Activated CD4-positive, alpha-beta T cell treated with anti-CD3 and anti-CD28 coated beads for 36 hours (primary cell): ENCODE measurements at regions of chr2 and their contacts with region 1.

Region 1: DNA sequence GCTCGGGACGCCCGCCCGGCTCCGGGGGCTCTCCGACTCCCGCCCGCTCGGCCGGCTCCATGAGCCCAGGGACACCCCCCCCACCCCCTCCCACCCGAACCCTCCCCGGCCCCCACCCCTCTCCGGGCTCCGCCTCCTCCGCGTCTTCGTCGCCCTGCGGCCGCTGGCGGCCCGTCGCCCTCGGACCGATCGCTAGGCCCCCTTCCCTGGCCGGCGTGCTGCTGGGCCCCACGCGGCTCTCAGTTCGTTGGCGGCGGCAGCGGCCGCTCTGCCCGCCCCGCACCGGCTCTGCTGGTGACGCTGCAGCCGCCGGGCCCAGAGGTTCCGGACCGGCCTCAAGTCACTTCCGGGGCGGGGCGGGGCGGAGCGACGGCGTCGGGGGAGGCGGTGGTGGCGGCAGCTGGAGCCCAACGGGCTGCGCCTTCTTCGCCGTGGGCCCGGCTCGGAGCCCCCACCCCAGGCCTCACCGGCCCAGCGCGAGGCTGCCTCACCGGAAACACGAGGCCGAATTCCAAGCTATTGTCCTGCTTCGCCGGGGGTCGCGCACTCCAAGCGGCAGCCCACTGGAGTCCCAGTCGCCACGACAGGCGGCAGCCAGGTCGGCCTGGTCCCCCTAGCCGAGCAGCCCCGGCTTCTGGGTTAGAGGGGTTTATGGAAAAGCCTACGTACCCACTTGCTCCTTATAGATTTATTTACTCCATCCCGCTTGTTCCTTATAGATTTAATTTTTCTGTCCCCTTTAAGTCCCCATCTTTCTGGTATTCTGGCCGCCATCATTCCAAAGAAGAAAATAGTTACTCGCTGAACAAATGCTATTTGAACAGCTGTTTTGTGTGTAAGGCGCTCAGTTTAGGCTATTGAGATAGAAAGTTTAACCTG is at the start of gene PSME4:
- DNase-seq: peak; percentile 96
- ATAC-seq: peak; percentile 86
- H3K4me3 Mint-ChIP-seq: peak within 1 kb of the TSS; percentile 84
- H3K27ac Mint-ChIP-seq: peak within 1 kb of the TSS; percentile 97
- H3K4me1 Mint-ChIP-seq: peaks cover 35% of the 10 kb centered on the region
- H3K27me3 Mint-ChIP-seq: no peaks in the 10 kb centered on the region
- total RNA-seq, gene PSME4: 37.8 to 44.3 TPM

Region 2: GRCh38 chr2:53767405-53768241 is 203.3 kb before region 1 on chr2 and contains the start of gene CHAC2:
- CTCF ChIA-PET with region 1: no interaction called
- POLR2A ChIA-PET with region 1: no interaction called
- intact Hi-C with region 1: loop called in 1 of 2 experiments (anchors 1 kb)
- DNase-seq: peak; percentile 94
- ATAC-seq: peak; percentile 96
- H3K4me3 Mint-ChIP-seq: peak within 1 kb of the TSS; percentile 91
- H3K27ac Mint-ChIP-seq: peak within 1 kb of the TSS; percentile 96
- H3K4me1 Mint-ChIP-seq: peaks cover 26% of the 10 kb centered on the region
- H3K27me3 Mint-ChIP-seq: no peaks in the 10 kb centered on the region
- total RNA-seq, gene CHAC2: 15.8 to 17.4 TPM

Region 3: GRCh38 chr2:53886406-53887280 is 84.3 kb before region 1 on chr2:
- CTCF ChIA-PET with region 1: no interaction called
- POLR2A ChIA-PET with region 1: no interaction called
- intact Hi-C with region 1: loop called in 1 of 2 experiments (anchors 2 kb)
- DNase-seq: no peak
- ATAC-seq: peak; percentile 88
- H3K4me3 Mint-ChIP-seq: no peak overlapping the region
- H3K27ac Mint-ChIP-seq: peak overlapping the region; percentile 38
- H3K4me1 Mint-ChIP-seq: peaks cover 28% of the 10 kb centered on the region
- H3K27me3 Mint-ChIP-seq: no peaks in the 10 kb centered on the region

Region 4: GRCh38 chr2:54041135-54041534 is 70.2 kb after region 1 on chr2:
- CTCF ChIA-PET with region 1: interaction called, 3 read pairs
- POLR2A ChIA-PET with region 1: interaction called, 4 read pairs
- intact Hi-C with region 1: loop called (anchors 2 kb)
- DNase-seq: peak; percentile 80
- ATAC-seq: peak; percentile 98
- H3K4me3 Mint-ChIP-seq: no peak overlapping the region
- H3K27ac Mint-ChIP-seq: no peak overlapping the region
- H3K4me1 Mint-ChIP-seq: no peaks in the 10 kb centered on the region
- H3K27me3 Mint-ChIP-seq: no peaks in the 10 kb centered on the region

Region 5: GRCh38 chr2:54330162-54330925 is 359.4 kb after region 1 on chr2:
- CTCF ChIA-PET with region 1: no interaction called
- POLR2A ChIA-PET with region 1: no interaction called
- intact Hi-C with region 1: loop called in 1 of 2 experiments (anchors 2 kb)
- DNase-seq: peak; percentile 94
- ATAC-seq: peak; percentile 99
- H3K4me3 Mint-ChIP-seq: peak overlapping the region; percentile 72
- H3K27ac Mint-ChIP-seq: peak overlapping the region; percentile 44
- H3K4me1 Mint-ChIP-seq: peaks cover 15% of the 10 kb centered on the region
- H3K27me3 Mint-ChIP-seq: peaks cover 15% of the 10 kb centered on the region